MCF 10A (cell line): ENCODE measurements at regions of chr5 and their contacts with region 1.

Region 1: GRCh38 chr5:179732417-179732917 is at the start of gene MAML1:
- DNase-seq: peak; percentile 100
- H3K4me3 Mint-ChIP-seq: peak within 1 kb of the TSS; percentile 91
- H3K27ac Mint-ChIP-seq: peak within 1 kb of the TSS; percentile 58
- H3K4me1 Mint-ChIP-seq: peaks cover 20% of the 10 kb centered on the region
- H3K27me3 Mint-ChIP-seq: no peaks in the 10 kb centered on the region
- CTCF ChIP-seq: no peak
- total RNA-seq, gene MAML1: 36.4 and 38.4 TPM in 2 replicates

Region 2: GRCh38 chr5:178312880-178313282 is 1419.6 kb before region 1 on chr5:
- CTCF ChIA-PET with region 1: no interaction called
- POLR2A ChIA-PET with region 1: no interaction called
- intact Hi-C with region 1: no loop called
- DNase-seq: peak; percentile 56
- H3K4me3 Mint-ChIP-seq: no peak overlapping the region
- H3K27ac Mint-ChIP-seq: no peak overlapping the region
- H3K4me1 Mint-ChIP-seq: no peaks in the 10 kb centered on the region
- H3K27me3 Mint-ChIP-seq: peaks cover 24% of the 10 kb centered on the region
- CTCF ChIP-seq: no peak

Region 3: DNA sequence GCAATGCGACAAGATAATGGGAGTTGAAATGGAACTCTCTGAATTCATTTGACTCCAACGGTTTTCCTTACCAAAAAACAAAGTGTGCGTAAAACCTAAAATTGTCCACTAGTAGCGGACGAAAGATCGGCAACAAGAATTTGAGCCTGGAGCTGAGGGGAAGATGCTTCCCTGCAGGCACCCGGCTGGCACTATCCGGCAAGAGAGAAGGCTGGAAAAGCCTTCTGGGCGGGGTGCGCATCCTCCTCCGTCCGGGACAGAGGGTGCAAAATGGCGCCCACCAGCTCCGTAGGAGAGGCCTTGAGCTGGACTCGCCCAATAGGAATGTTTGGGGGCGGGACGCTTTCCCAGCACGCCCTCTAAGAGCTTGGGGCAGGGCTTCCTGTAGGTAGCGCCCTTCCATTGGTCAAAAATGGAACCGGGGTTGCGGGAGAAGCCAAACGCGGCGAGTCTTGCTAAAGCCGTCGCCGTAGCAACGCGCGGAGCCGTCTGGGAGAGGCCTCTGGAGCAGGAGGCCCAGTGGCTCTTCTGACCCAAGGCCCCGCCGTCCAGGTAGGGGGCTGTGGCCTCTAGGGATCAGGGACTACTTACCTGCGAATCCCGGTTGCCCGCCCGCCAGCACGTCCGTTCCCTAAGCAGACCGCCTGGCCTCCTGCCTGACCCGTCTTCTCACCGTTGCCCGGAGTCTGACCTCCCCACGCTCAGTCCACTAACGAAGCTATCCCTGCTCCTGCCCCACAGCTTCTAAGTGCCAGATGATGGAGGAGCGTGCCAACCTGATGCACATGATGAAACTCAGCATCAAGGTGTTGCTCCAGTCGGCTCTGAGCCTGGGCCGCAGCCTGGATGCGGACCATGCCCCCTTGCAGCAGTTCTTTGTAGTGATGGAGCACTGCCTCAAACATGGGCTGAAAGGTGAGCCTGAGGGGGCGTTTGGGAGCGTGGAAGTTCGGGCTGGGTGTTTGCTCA is 172.9 kb before region 1 on chr5:
- CTCF ChIA-PET with region 1: no interaction called
- POLR2A ChIA-PET with region 1: interaction called, 10 read pairs
- intact Hi-C with region 1: no loop called
- DNase-seq: peak; percentile 100
- H3K4me3 Mint-ChIP-seq: peak overlapping the region; percentile 98
- H3K27ac Mint-ChIP-seq: peak overlapping the region; percentile 98
- H3K4me1 Mint-ChIP-seq: peaks cover 19% of the 10 kb centered on the region
- H3K27me3 Mint-ChIP-seq: no peaks in the 10 kb centered on the region
- CTCF ChIP-seq: no peak

Region 4: GRCh38 chr5:179623003-179623880 is 109.2 kb before region 1 on chr5 and contains the start of gene HNRNPH1:
- CTCF ChIA-PET with region 1: no interaction called
- POLR2A ChIA-PET with region 1: interaction called, 52 read pairs
- intact Hi-C with region 1: no loop called
- DNase-seq: peak; percentile 100
- H3K4me3 Mint-ChIP-seq: peak within 1 kb of the TSS; percentile 98
- H3K27ac Mint-ChIP-seq: peak within 1 kb of the TSS; percentile 99
- H3K4me1 Mint-ChIP-seq: peaks cover 46% of the 10 kb centered on the region
- H3K27me3 Mint-ChIP-seq: no peaks in the 10 kb centered on the region
- CTCF ChIP-seq: no peak
- total RNA-seq, gene HNRNPH1: 907 and 981 TPM in 2 replicates

Region 5: DNA sequence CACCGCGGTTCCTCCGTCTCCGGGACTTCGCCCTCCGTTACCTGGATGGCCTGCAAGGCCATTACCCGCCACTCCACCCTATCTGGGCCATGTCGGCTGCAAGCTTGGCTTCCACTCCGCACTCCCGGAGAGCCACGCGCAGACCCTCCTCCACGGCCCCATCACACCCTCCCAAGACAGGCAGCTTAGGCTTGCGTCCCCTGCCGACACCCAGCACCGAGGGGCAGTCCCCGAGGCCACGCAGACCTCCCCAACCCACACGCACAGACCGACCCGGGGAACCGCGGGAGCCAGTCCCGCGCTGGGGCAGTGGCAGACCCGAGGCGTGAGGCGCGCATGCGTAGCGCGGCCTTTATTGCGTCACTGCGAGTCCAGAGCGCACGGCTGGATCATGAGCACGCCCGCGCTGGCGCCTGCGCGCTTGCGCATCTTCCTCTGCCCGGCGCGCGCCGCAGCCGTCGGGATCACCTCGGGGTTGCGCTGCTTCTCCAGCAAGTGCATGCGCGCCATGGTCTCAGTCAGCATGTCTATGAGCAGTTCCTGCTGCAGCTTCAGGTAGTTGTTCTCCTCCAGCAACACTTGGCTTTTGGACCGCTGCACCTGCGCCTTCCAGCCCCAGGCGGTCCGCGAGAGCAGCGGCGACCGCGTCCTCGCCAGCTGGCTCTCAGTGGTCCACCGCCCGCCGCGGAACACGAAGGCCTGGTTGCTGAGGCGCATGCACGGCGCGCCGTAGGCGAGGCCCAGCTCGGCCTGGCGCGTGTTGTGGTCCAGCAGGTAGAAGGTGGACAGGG is 54.0 kb before region 1 on chr5:
- CTCF ChIA-PET with region 1: interaction called, 5 read pairs
- POLR2A ChIA-PET with region 1: interaction called, 22 read pairs
- intact Hi-C with region 1: no loop called
- DNase-seq: peak; percentile 97
- H3K4me3 Mint-ChIP-seq: peak overlapping the region; percentile 99
- H3K27ac Mint-ChIP-seq: peak overlapping the region; percentile 95
- H3K4me1 Mint-ChIP-seq: peaks cover 18% of the 10 kb centered on the region
- H3K27me3 Mint-ChIP-seq: no peaks in the 10 kb centered on the region
- CTCF ChIP-seq: no peak

Region 6: DNA sequence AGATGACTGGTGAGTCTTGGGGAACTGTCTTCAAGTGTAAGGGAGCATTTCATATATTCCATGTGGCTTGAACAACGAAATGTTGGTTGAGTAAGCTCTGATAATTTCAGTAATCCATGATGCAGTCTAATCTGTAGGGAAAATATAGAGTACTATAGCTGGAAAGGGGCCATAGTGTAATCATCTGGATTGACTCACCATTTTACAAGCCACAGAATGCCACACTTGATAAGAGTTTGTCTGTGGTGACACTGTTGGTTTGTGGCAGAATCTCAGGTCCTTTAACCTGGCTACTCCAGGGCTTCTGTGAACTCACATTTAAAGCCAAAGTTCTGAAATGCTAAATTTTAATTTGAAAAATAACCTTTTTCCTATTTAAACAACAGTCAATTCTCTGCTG is 16.2 kb before region 1 on chr5:
- CTCF ChIA-PET with region 1: no interaction called
- POLR2A ChIA-PET with region 1: interaction called, 34 read pairs
- intact Hi-C with region 1: no loop called
- DNase-seq: no peak
- H3K4me3 Mint-ChIP-seq: no peak overlapping the region
- H3K27ac Mint-ChIP-seq: no peak overlapping the region
- H3K4me1 Mint-ChIP-seq: peaks cover 5% of the 10 kb centered on the region
- H3K27me3 Mint-ChIP-seq: no peaks in the 10 kb centered on the region
- CTCF ChIP-seq: no peak

Region 7: GRCh38 chr5:179795863-179796833 is 63.7 kb after region 1 on chr5:
- CTCF ChIA-PET with region 1: no interaction called
- POLR2A ChIA-PET with region 1: interaction called, 20 read pairs
- intact Hi-C with region 1: loop called (anchors 1 kb)
- DNase-seq: peak; percentile 88
- H3K4me3 Mint-ChIP-seq: peak overlapping the region; percentile 71
- H3K27ac Mint-ChIP-seq: peak overlapping the region; percentile 26
- H3K4me1 Mint-ChIP-seq: peaks cover 8% of the 10 kb centered on the region
- H3K27me3 Mint-ChIP-seq: no peaks in the 10 kb centered on the region
- CTCF ChIP-seq: peak; percentile 86

Region 8: DNA sequence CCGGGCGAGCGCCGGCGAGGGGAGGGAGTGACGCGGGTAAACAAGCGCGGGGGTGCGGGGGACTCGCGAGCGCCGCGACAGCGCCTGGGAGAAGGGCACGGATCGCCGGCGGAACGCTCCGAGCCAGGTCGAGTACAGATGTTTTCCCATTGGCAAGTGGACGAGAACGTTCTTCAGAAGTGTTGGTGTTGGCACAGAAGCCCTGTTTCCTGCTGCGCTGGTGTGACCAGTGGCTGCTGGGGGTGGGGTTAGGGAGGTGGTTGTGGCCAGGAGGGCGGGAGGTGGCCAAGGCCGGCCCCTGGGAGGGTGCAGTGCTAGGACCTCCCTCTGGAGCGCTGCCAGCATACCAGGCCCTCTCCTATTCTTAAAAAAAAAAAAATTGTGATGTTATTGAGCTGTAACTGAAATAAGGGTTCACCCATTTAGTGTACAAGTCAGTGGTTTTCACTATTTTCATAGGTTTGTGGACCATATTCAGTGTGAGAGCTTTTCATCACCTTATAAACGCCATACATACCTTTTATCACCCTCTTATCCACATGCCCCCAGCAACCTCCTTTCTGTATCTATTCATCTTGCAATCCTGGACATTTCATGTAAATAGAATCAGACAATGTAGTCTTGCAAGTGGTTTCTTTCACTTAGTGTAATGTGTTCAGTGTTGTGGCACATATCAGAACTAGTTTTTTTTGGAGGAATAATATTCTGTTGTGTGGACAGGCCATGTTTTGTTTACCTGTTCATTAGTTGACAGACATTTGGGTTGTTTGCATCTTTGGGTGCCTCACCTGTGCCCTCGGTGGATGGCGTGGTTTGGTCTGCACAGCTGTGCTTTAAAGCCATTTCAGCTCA is 89.3 kb after region 1 on chr5:
- CTCF ChIA-PET with region 1: no interaction called
- POLR2A ChIA-PET with region 1: interaction called, 30 read pairs
- intact Hi-C with region 1: no loop called
- DNase-seq: peak; percentile 99
- H3K4me3 Mint-ChIP-seq: peak overlapping the region; percentile 94
- H3K27ac Mint-ChIP-seq: peak overlapping the region; percentile 95
- H3K4me1 Mint-ChIP-seq: peaks cover 48% of the 10 kb centered on the region
- H3K27me3 Mint-ChIP-seq: no peaks in the 10 kb centered on the region
- CTCF ChIP-seq: no peak

Region 9: DNA sequence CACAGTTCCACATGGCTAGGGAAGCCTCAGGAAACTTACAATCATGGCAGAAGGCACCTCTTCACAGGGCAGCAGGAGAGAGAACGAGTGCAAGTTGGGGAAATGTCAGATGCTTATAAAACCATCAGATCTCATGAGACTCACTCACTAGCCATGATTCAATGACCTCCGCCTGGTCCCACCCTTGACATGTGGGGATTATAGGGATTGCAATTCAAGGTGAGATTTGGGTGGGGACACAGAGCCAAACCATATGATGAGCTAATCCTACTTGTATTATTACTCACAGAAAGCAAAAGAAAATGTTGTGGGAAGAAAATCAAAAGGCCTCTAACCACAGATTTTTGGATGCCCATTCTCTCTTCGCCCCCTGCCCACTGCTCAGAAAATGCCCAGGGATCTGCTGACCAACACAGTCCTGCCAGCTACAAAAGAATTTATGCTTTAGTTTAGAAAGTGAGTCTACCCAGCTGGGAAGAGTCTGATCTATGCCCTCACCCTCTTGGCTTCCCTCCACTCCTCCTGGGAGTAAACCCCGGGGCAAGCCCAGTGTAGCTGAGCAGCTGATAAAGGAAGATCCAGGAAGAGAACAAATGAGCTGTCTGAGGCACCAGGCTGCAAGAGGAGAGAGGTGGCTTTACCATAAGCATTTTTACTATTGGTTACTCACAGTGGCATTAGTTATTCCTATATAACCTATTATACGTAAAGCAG is 286.0 kb after region 1 on chr5:
- CTCF ChIA-PET with region 1: no interaction called
- POLR2A ChIA-PET with region 1: no interaction called
- intact Hi-C with region 1: no loop called
- DNase-seq: no peak
- H3K4me3 Mint-ChIP-seq: no peak overlapping the region
- H3K27ac Mint-ChIP-seq: no peak overlapping the region
- H3K4me1 Mint-ChIP-seq: peaks cover 5% of the 10 kb centered on the region
- H3K27me3 Mint-ChIP-seq: no peaks in the 10 kb centered on the region
- CTCF ChIP-seq: no peak